Transverse colon (tissue), 4 donors: ENCODE measurements at regions of chrX and their contacts with region 1.

Region 1: GRCh38 chrX:40153335-40154249 is 55.8 kb upstream of the BCOR start:
- DNase-seq: peak; percentile 68
- H3K4me3 ChIP-seq: peak overlapping the region; percentile 6 to 56 (median 33)
- H3K27ac ChIP-seq: peak overlapping the region; percentile 68 to 81 (median 74)
- H3K4me1 ChIP-seq: peaks cover 5 to 53% (median 37%) of the 10 kb centered on the region in 4 donors
- H3K27me3 ChIP-seq: no peaks in the 10 kb centered on the region
- CTCF ChIP-seq: peak in 1 of 5 experiments; percentile 13
- EP300 ChIP-seq: no peak
- POLR2A ChIP-seq: no peak

Region 2: GRCh38 chrX:39730662-39731397 is 422.8 kb before region 1 on chrX:
- in situ Hi-C with region 1: no loop called
- intact Hi-C with region 1: loop called (anchors 10 kb)
- DNase-seq: peak; percentile 67
- H3K4me3 ChIP-seq: no peak overlapping the region
- H3K27ac ChIP-seq: peak overlapping the region in 3 of 4 donors; percentile 41 to 59 (median 54)
- H3K4me1 ChIP-seq: peaks cover 0 to 24% (median 3%) of the 10 kb centered on the region in 4 donors
- H3K27me3 ChIP-seq: no peaks in the 10 kb centered on the region
- CTCF ChIP-seq: peak in 4 of 5 experiments; percentile 30 to 49 (median 46)
- EP300 ChIP-seq: no peak
- POLR2A ChIP-seq: no peak

Region 3: GRCh38 chrX:40013266-40014195 is 140.1 kb before region 1 on chrX:
- in situ Hi-C with region 1: no loop called
- intact Hi-C with region 1: loop called (anchors 10 kb)
- DNase-seq: peak; percentile 87
- H3K4me3 ChIP-seq: peak overlapping the region; percentile 30 to 68 (median 50)
- H3K27ac ChIP-seq: peak overlapping the region; percentile 88 to 97 (median 92)
- H3K4me1 ChIP-seq: peaks cover 0 to 35% (median 27%) of the 10 kb centered on the region in 4 donors
- H3K27me3 ChIP-seq: no peaks in the 10 kb centered on the region
- CTCF ChIP-seq: peak in 1 of 5 experiments; percentile 15
- EP300 ChIP-seq: peak; percentile 1
- POLR2A ChIP-seq: peak; percentile 85

Region 4: DNA sequence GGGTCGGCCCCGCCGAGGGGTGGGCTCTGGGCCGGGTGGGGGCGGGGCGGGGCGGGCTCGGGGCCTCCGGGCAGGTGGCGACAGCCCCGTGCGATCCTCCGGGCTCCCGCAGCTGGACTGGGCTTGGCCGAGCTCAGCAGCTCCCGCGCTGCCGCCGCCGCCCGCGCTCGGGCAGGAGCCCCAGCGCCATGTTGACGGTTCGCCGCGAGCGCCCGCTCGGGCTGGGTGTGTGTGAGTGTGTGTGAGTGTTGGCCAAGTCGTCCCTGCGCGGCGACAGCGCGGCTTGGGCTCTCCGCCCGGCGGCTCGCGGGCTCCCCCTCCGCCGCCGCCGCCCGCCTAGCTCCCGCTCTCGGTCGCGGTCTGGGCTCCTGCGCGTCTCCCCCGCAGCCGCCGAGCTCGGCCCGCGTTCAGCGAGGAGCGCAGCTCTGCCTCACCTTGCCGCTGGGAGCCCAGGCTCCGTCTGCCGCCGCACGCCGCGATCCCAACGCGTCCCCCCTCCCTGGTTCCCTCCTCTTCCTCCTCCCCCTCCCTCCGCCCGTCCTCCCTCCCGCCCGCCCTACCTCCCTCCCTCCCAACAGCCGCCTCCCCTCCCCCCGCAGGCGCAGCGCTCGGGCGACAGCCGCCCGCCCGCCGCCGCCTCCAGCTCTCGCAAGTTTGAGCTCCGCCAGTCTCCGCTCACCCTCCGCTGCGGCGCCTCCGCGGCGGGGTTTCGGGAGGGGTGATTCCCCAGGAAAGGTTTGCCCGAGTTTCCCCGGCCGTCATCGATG is 55.9 kb before region 1 on chrX and contains the start of gene BCOR:
- in situ Hi-C with region 1: no loop called
- intact Hi-C with region 1: loop called (anchors 5 kb)
- DNase-seq: peak; percentile 84
- H3K4me3 ChIP-seq: peak within 1 kb of the TSS; percentile 40 to 87 (median 77)
- H3K27ac ChIP-seq: peak within 1 kb of the TSS; percentile 91 to 95 (median 94)
- H3K4me1 ChIP-seq: peaks cover 2 to 25% (median 22%) of the 10 kb centered on the region in 4 donors
- H3K27me3 ChIP-seq: no peaks in the 10 kb centered on the region
- CTCF ChIP-seq: no peak
- EP300 ChIP-seq: no peak
- POLR2A ChIP-seq: peak; percentile 58
- total RNA-seq, gene BCOR: 17.9 to 27.8 (median 20.4) TPM